Activated CD4-positive, alpha-beta memory T cell treated with anti-CD3 and anti-CD28 coated beads for 36 hours (primary cell): ENCODE measurements at regions of chr5 and their contacts with region 1.

Region 1: GRCh38 chr5:157471709-157472108 is 11.7 kb downstream of the NIPAL4 start:
- DNase-seq: peak; percentile 40
- H3K4me3 Mint-ChIP-seq: no peak overlapping the region
- H3K27ac Mint-ChIP-seq: no peak overlapping the region
- H3K4me1 Mint-ChIP-seq: no peaks in the 10 kb centered on the region
- H3K27me3 Mint-ChIP-seq: no peaks in the 10 kb centered on the region

Region 2: DNA sequence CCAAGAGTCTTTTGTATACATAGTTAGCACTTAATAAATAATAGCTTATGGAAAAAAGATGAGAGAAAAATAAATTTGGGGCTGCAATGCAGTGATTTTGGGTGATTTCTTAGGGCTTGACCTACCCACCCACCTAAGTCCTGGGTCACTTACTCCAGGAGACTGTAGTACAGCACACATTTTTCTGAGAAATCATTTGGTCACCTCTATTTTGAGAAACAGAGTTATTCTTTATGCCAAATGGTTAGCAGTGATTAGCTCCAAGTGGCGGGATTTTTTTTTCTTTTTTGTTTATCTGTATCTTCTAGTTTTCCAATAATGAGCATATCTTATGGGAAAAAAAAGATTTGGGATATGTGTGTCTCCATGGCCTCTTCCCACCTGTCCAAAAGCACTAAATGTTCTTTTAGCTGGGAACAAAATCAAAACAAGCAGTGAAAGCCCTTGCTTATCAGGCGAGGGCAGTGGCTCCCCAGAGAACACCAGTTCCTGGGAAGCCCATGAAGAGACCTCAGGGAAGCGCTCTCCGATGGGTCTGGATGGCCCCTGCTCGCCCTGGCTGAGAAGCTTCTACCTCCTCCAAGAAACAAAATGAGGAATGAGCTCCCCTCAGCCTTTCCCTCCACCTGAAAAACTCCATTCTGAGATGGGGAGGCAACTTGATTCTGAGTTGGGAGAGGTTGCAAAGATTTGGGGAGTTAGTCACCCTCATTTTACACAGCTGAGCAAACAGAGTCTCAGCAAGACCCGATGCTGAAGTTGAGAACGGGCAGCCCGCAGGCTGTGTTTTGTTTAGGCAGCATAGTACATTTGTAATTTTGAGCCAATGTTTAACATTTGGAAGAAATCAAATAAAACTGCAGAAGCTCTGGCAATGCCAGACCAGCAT is 135.9 kb before region 1 on chr5:
- CTCF ChIA-PET with region 1: interaction called, 10 read pairs
- POLR2A ChIA-PET with region 1: no interaction called
- intact Hi-C with region 1: loop called (anchors 5 kb)
- DNase-seq: no peak
- H3K4me3 Mint-ChIP-seq: no peak overlapping the region
- H3K27ac Mint-ChIP-seq: no peak overlapping the region
- H3K4me1 Mint-ChIP-seq: peaks cover 15% of the 10 kb centered on the region
- H3K27me3 Mint-ChIP-seq: no peaks in the 10 kb centered on the region

Region 3: GRCh38 chr5:157449011-157449723 is 22.5 kb before region 1 on chr5:
- CTCF ChIA-PET with region 1: interaction called, 16 read pairs
- POLR2A ChIA-PET with region 1: no interaction called
- intact Hi-C with region 1: no loop called
- DNase-seq: no peak
- H3K4me3 Mint-ChIP-seq: no peak overlapping the region
- H3K27ac Mint-ChIP-seq: no peak overlapping the region
- H3K4me1 Mint-ChIP-seq: no peaks in the 10 kb centered on the region
- H3K27me3 Mint-ChIP-seq: no peaks in the 10 kb centered on the region

Region 4: GRCh38 chr5:157456301-157456700 is 15.4 kb before region 1 on chr5:
- CTCF ChIA-PET with region 1: interaction called, 10 read pairs
- POLR2A ChIA-PET with region 1: no interaction called
- intact Hi-C with region 1: no loop called
- DNase-seq: no peak
- H3K4me3 Mint-ChIP-seq: no peak overlapping the region
- H3K27ac Mint-ChIP-seq: no peak overlapping the region
- H3K4me1 Mint-ChIP-seq: peaks cover 8% of the 10 kb centered on the region
- H3K27me3 Mint-ChIP-seq: peaks cover 11% of the 10 kb centered on the region

Region 5: DNA sequence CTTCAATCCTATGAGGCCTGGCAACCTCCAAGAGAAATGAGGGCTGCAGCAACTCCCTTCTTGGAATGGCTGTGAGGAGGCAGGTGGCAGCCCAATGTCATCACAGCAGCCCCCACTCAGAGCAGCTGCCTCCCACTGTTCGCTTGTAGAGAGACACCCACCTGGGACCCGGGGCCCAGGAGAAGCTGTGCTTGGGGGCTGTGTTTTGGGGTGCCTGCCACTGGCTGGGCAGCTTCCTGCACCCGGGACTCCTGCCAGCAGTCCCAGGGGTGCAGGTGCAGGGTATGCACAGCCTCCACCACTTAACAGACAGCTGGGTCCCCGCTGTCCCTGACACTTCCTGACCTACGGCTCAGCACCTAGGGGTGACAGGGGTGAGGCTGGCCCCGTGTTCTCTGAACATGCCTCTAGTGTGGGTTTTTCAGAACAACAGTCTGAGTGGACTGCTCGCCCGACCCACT is 14.5 kb after region 1 on chr5:
- CTCF ChIA-PET with region 1: interaction called, 25 read pairs
- POLR2A ChIA-PET with region 1: interaction called, 4 read pairs
- intact Hi-C with region 1: no loop called
- DNase-seq: no peak
- H3K4me3 Mint-ChIP-seq: no peak overlapping the region
- H3K27ac Mint-ChIP-seq: no peak overlapping the region
- H3K4me1 Mint-ChIP-seq: peaks cover 24% of the 10 kb centered on the region
- H3K27me3 Mint-ChIP-seq: no peaks in the 10 kb centered on the region

Region 6: DNA sequence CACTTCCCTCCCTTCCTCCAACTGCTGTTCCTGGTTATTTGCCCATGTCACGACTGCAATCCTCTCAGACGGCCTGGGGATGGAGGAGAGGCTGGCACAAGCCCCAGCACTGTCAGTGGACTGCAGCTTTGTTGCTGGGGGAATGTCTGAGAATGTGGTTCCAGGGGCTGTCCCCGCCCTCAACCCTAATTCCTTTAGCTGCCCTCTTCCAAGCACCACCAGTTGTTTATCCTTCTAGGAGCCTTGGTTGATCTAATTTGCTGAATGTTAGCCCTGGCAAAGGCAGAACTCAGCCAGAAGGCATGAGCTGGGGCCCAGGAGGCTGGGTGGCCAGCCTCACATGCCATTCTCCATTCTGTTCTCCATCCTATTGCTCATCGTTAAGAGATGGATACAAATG is 52.3 kb after region 1 on chr5:
- CTCF ChIA-PET with region 1: no interaction called
- POLR2A ChIA-PET with region 1: no interaction called
- intact Hi-C with region 1: no loop called
- DNase-seq: no peak
- H3K4me3 Mint-ChIP-seq: no peak overlapping the region
- H3K27ac Mint-ChIP-seq: no peak overlapping the region
- H3K4me1 Mint-ChIP-seq: peaks cover 37% of the 10 kb centered on the region
- H3K27me3 Mint-ChIP-seq: no peaks in the 10 kb centered on the region

Region 7: GRCh38 chr5:158840193-158840592 is 1368.5 kb after region 1 on chr5:
- CTCF ChIA-PET with region 1: no interaction called
- POLR2A ChIA-PET with region 1: no interaction called
- intact Hi-C with region 1: no loop called
- DNase-seq: no peak
- H3K4me3 Mint-ChIP-seq: no peak overlapping the region
- H3K27ac Mint-ChIP-seq: no peak overlapping the region
- H3K4me1 Mint-ChIP-seq: no peaks in the 10 kb centered on the region
- H3K27me3 Mint-ChIP-seq: no peaks in the 10 kb centered on the region